ENCODE measurements at regions of chr17 and their contacts with region 1.

Region 1: DNA sequence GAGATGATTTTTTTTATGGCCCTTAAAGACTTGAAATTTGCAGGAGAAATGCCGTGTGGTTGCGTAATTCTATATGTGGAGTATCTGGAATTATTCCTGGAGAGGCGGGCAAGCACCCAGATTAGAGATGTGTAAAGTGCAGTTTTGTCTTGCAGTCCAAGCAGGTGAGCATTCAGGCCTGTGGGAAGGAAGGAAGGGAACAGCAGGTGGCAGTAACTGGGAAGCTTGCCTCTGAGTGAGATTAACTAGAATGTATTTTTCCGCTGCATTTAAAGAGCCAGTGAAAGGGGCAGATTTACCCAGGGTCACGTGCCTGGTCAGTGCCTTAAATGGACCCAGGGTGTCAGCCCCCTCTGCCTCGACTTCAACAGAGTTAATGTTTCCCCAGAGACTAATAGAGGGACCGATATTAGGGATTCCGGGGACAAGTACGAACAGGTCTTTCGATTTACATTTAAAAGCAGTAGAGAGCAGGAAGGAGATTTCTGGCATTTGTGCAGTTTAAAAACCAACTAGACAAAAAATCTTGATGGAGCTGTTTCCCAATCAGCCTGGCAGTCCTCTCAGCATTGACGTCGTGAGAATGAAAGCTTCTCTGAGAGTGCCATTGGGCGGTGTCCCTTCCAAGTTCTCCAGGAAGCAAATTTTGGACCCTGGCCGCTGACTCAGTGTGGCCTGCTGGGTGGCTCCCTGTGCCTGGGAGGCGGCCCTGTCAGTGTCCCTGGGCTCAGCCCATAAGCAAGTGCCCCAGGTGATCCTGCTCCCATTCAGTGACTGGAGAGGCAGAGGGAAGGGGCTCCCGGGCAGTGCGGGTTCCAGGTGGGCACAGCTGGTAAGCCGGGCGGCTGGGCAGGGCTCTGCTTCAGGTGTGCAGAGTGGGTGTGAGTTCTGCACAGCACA is 38.2 kb downstream of the KSR1 start:
- DNase-seq: no peak
- H3K4me3 ChIP-seq: no peak overlapping the region; a peak in 1 of 8 replicates
- H3K27ac ChIP-seq: no peak overlapping the region
- H3K4me1 ChIP-seq: peaks cover 29 to 53% (median 41%) of the 10 kb centered on the region in 4 experiments
- H3K27me3 ChIP-seq: no peaks in the 10 kb centered on the region
- CTCF ChIP-seq: peak; percentile 28 to 44 (median 33)
- EP300 ChIP-seq: no peak
- POLR2A ChIP-seq: no peak
- RAD21 ChIP-seq: peak in 1 of 2 experiments; percentile 50; a peak in 2 of 4 replicates

Region 2: GRCh38 chr17:27306276-27306835 is 188.1 kb before region 1 on chr17:
- CTCF ChIA-PET with region 1: no interaction called
- POLR2A ChIA-PET with region 1: no interaction called
- DNase-seq: no peak
- H3K4me3 ChIP-seq: no peak overlapping the region
- H3K27ac ChIP-seq: no peak overlapping the region
- H3K4me1 ChIP-seq: no peaks in the 10 kb centered on the region
- H3K27me3 ChIP-seq: no peaks in the 10 kb centered on the region
- CTCF ChIP-seq: no peak
- EP300 ChIP-seq: no peak
- POLR2A ChIP-seq: no peak
- RAD21 ChIP-seq: no peak

Region 3: DNA sequence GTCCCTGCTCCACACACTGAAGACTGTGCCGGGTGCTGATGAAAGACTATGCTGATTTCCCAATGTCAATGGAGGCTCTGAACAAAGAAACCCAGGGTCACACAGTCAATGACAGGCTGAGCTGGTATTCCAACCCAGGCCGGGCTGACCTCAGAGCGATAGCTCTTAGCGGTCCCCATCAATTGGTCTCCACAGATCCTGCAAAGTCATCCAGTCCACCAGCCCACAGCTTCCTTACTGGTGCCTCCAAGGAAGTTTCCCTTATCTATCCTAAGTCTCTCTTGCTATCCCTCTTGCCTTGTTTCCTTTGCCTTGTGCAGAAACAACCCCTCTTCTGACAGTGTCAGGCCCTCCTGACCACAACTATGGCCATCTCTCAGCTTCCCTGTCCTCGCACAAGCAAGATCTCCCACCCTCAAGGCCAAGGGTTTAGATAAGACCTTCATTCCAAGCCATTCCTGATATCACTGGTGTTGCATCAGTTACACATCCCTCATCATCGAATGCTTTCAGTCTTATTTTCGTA is 90.9 kb before region 1 on chr17:
- CTCF ChIA-PET with region 1: no interaction called
- POLR2A ChIA-PET with region 1: no interaction called
- DNase-seq: no peak
- H3K4me3 ChIP-seq: no peak overlapping the region
- H3K27ac ChIP-seq: no peak overlapping the region
- H3K4me1 ChIP-seq: peaks cover 0 to 4% (median under 1%) of the 10 kb centered on the region in 4 experiments; a peak in 1 of 7 replicates
- H3K27me3 ChIP-seq: no peaks in the 10 kb centered on the region
- CTCF ChIP-seq: no peak
- EP300 ChIP-seq: no peak
- POLR2A ChIP-seq: no peak
- RAD21 ChIP-seq: no peak

Region 4: GRCh38 chr17:27513849-27514248 is 19.4 kb after region 1 on chr17:
- CTCF ChIA-PET with region 1: interaction called, 35 read pairs
- POLR2A ChIA-PET with region 1: interaction called, 4 read pairs
- DNase-seq: no peak
- H3K4me3 ChIP-seq: no peak overlapping the region; a peak in 1 of 8 replicates
- H3K27ac ChIP-seq: peak overlapping the region; percentile 57
- H3K4me1 ChIP-seq: peaks cover 3 to 26% (median 17%) of the 10 kb centered on the region in 4 experiments
- H3K27me3 ChIP-seq: no peaks in the 10 kb centered on the region
- CTCF ChIP-seq: no peak
- EP300 ChIP-seq: no peak
- POLR2A ChIP-seq: no peak
- RAD21 ChIP-seq: no peak

Measured in H1 (cell line).